ENCODE measurements at regions of chr2 and their contacts with region 1.

Region 1: DNA sequence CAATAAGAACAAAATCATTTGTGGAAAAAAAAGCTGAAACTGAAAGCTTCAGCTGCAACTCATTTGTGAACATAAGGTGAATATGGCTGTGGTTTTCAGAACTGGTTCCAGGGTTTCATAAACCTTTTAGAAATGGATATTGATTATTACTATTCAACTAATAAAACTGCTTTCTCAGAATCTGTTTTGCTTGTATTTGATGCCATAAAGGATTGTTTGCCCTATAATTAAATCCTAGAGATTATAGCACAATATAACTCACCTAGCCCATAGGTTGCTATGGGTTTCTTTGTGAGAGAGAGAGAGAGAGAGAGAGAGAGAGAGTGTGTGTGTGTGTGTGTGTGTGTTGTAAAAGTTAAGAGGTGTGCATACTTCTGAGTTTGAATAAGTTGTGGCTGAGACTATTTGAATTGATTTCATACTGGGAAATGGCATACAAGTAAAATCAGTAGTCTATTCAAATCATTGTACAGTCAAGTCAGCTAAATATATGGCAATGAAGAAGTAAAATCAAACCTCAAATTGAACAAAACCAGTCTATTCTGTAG is 339.2 kb downstream of the ARHGAP15 start:
- DNase-seq: no peak
- ATAC-seq: no peak
- H3K4me3 ChIP-seq: no peak overlapping the region
- H3K4me3 Mint-ChIP-seq: no peak overlapping the region
- H3K27ac ChIP-seq: no peak overlapping the region
- H3K27ac Mint-ChIP-seq: no peak overlapping the region
- H3K4me1 ChIP-seq: no peaks in the 10 kb centered on the region
- H3K4me1 Mint-ChIP-seq: peaks cover 19 to 44% (median 31%) of the 10 kb centered on the region in 3 donors
- H3K27me3 ChIP-seq: no peaks in the 10 kb centered on the region
- H3K27me3 Mint-ChIP-seq: no peaks in the 10 kb centered on the region

Region 2: GRCh38 chr2:143255899-143256298 is 212.5 kb before region 1 on chr2:
- CTCF ChIA-PET with region 1: no interaction called
- POLR2A ChIA-PET with region 1: no interaction called
- DNase-seq: peak in 1 of 35 experiments; percentile 55
- ATAC-seq: peak in 1 of 4 experiments; percentile 33
- H3K4me3 ChIP-seq: no peak overlapping the region
- H3K4me3 Mint-ChIP-seq: peak overlapping the region; percentile 58 to 71 (median 71)
- H3K27ac ChIP-seq: peak overlapping the region; percentile 72
- H3K27ac Mint-ChIP-seq: peak overlapping the region; percentile 98 to 99
- H3K4me1 ChIP-seq: peaks cover 15 to 58% of the 10 kb centered on the region in 2 experiments
- H3K4me1 Mint-ChIP-seq: peaks cover 81 to 82% (median 81%) of the 10 kb centered on the region in 3 donors
- H3K27me3 ChIP-seq: no peaks in the 10 kb centered on the region
- H3K27me3 Mint-ChIP-seq: no peaks in the 10 kb centered on the region

Region 3: DNA sequence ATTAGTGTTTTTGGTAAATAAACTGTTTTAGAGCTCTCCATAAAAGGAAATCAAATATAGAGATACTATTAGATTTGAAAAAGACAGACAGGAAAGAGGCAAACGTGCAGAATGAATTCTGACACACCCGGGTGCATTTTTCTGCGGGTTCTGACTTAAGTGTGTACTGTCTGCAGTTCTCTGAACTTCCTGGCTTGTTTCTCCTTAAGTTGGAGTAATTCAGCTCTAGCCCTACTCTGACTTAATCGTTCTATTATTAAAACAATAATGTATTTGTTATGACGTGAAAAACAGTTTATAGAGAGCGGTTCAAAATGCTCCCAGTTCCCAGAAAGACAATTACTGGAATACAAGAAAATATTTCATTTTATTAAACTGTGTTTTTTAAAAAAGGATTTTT is 33.3 kb before region 1 on chr2:
- CTCF ChIA-PET with region 1: interaction called in 1 of 2 experiments, 10 read pairs
- POLR2A ChIA-PET with region 1: no interaction called
- DNase-seq: no peak
- ATAC-seq: peak in 1 of 4 experiments; percentile 35
- H3K4me3 ChIP-seq: no peak overlapping the region
- H3K4me3 Mint-ChIP-seq: no peak overlapping the region
- H3K27ac ChIP-seq: no peak overlapping the region
- H3K27ac Mint-ChIP-seq: no peak overlapping the region
- H3K4me1 ChIP-seq: peaks cover 0 to 12% of the 10 kb centered on the region in 2 experiments
- H3K4me1 Mint-ChIP-seq: peaks cover 39 to 45% (median 41%) of the 10 kb centered on the region in 3 donors
- H3K27me3 ChIP-seq: no peaks in the 10 kb centered on the region
- H3K27me3 Mint-ChIP-seq: no peaks in the 10 kb centered on the region